ENCODE measurements at regions of chr21 and their contacts with region 1.

Region 1: GRCh38 chr21:31410499-31411131 is 66.6 kb upstream of the TIAM1 start:
- DNase-seq: no peak
- H3K4me3 ChIP-seq: no peak overlapping the region
- H3K27ac ChIP-seq: no peak overlapping the region
- H3K4me1 ChIP-seq: no peaks in the 10 kb centered on the region
- H3K27me3 ChIP-seq: no peaks in the 10 kb centered on the region
- CTCF ChIP-seq: no peak

Region 2: GRCh38 chr21:31366825-31367224 is 43.8 kb before region 1 on chr21:
- CTCF ChIA-PET with region 1: interaction called, 5 read pairs
- dilution Hi-C with region 1: no loop called
- in situ Hi-C with region 1: loop called in 1 of 2 experiments (anchors 5 kb)
- intact Hi-C with region 1: no loop called
- DNase-seq: peak; percentile 95
- H3K4me3 ChIP-seq: no peak overlapping the region
- H3K27ac ChIP-seq: no peak overlapping the region
- H3K4me1 ChIP-seq: peaks cover 11% of the 10 kb centered on the region
- H3K27me3 ChIP-seq: no peaks in the 10 kb centered on the region
- CTCF ChIP-seq: no peak

Region 3: DNA sequence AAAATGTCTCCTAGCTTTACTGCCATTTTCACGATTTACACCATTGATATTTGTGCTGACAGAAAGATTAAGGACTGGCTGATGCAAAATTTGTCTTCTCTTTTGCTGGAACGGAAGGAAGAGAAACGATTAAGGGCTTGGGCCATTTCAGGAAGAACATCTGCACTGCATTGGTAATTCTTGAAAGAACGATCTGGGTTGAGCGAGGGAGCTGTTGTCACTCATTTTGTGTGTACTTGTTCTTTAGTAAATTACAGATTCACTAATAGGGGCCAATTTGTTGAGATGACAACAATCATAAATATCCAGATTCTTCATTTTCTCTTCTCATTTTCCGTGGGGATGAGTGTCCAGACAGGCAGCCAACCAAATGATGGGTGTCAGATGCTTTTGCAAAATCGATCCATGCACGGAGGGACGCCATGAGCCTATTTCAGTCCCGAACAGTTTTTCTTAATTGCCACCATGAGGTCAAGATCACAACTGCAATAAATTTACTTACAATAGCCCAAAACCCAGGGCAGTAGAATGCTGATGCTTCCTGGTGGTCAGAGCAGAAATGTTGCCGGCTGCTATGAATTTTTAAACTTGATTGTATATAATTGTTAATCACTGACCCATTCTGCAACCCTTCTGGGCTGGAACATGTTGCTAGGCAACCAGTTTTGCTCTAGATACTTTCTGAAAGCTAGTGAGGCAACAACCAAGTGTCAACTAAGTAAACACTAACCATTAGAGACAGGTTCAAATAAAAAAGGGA is 65.8 kb after region 1 on chr21:
- CTCF ChIA-PET with region 1: no interaction called
- dilution Hi-C with region 1: loop called (anchors 5 kb)
- in situ Hi-C with region 1: no loop called
- intact Hi-C with region 1: no loop called
- DNase-seq: no peak
- H3K4me3 ChIP-seq: no peak overlapping the region
- H3K27ac ChIP-seq: no peak overlapping the region
- H3K4me1 ChIP-seq: no peaks in the 10 kb centered on the region
- H3K27me3 ChIP-seq: no peaks in the 10 kb centered on the region
- CTCF ChIP-seq: peak in 1 of 2 donors; percentile 8